GM18951 (cell line): ENCODE measurements at regions of chr10 and their contacts with region 1.

Region 1: GRCh38 chr10:18539335-18539734 is 112.1 kb downstream of the NSUN6 start:
- POLR2A ChIP-seq: no peak

Region 2: DNA sequence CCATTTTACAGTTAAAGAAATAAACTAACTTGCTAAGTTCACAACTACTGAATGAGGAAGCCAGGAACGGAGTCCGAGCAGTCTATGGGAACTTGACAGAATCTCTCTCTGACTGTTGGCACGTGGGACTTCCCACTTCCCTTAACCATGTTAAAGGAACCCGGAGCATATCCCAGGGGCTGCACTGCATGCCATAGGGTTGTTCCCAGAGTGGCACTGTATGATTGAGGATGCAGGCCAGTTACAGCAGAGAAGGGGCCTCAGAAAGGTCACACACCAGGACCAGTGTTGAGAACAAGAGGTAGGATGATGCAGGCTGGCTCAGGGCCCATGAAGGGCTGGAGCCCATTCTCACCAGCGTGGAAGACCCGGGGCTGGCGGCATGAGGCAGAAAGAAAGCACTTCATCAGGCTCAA is 89.7 kb before region 1 on chr10:
- in situ Hi-C with region 1: no loop called
- POLR2A ChIP-seq: no peak

Region 3: DNA sequence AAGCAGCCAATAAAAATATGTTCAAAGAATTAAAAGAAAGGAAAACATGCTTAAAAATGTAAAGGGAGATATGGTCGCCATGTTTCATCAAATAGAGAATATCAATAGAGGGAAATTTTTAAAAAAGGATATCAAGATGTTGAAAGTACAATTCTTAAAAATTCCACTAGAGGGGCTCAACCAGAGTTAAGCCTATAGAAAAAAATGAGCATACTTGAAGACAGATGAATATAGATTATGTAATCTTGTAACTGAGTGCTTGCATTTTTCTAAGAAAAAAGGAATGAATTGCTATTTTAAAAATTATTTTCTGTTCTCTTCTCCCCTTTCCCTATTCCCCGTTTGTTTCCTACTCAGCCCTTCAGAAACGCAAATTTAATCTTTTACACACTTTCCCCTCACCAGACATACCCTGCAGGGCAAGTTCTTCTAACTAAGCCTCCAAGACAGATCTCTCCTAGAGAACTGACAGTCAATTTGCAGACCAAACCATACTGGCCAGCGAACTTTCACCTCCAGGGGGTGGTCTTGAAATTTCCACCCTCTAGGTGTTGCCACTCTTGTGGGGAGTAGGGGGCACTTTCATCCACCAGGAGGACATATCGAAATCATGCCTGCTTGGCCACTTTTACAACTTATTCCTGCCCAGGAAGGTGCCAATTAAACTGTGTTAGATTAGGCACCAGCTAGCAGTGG is 44.4 kb after region 1 on chr10:
- in situ Hi-C with region 1: loop called (anchors 5 kb)
- POLR2A ChIP-seq: no peak